CD4-positive, alpha-beta memory T cell (primary cell): ENCODE measurements at regions of chr12 and their contacts with region 1.

Region 1: DNA sequence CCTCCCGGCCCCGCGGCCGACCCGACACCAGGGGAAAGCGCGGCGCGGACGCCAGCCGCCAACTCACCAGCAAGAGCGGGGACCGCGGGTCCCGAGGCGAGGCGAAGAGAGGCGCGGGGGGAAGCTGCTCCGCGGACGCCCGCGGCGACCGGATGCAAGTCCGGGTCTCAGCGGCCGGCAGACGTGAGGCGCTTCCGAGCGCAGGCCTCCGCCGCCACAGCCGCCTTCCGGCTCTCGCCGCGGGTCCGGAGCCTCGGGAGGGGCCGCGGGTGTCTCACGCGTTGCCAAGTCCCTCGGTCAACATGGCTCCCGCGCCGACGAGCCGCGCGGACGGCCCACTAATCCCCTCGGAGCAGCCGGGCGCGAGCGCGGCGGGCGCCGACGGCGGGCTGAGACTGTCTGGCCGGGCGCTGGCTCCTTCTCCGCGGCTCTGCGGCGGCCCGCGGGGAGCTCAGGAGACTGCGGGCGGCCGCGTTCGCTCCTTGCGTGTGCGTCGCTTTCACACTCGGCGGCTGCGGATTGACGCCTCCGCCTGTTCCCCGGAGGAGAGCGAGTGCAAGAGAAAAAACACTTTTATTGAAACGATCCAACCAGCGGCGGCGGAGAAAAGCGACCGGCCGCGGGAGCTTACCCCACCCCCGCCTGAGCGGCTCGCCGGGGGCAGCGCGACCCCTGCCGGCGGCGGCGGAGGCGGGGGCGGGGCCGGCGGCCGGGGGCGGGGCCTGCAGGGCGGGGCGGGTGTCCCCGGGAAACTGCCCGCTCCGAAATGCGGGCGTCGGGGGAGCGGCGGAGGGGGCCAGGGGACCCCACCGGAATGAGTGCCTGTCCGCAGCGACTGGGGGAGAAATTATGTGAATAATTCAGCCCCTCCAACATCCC is at the start of gene CDK17:
- DNase-seq: peak; percentile 90 to 92 (median 90)
- H3K4me3 ChIP-seq: peak within 1 kb of the TSS; percentile 86 to 87
- H3K4me3 Mint-ChIP-seq: peak within 1 kb of the TSS; percentile 96 to 99 (median 98)
- H3K27ac ChIP-seq: peak within 1 kb of the TSS; percentile 96
- H3K27ac Mint-ChIP-seq: peak within 1 kb of the TSS; percentile 96 to 99 (median 98)
- H3K4me1 ChIP-seq: peaks cover 45% of the 10 kb centered on the region
- H3K4me1 Mint-ChIP-seq: peaks cover 30 to 55% (median 40%) of the 10 kb centered on the region in 4 donors
- H3K27me3 ChIP-seq: no peaks in the 10 kb centered on the region
- H3K27me3 Mint-ChIP-seq: no peaks in the 10 kb centered on the region
- total RNA-seq, gene CDK17: 66.9 to 67.4 TPM

Region 2: DNA sequence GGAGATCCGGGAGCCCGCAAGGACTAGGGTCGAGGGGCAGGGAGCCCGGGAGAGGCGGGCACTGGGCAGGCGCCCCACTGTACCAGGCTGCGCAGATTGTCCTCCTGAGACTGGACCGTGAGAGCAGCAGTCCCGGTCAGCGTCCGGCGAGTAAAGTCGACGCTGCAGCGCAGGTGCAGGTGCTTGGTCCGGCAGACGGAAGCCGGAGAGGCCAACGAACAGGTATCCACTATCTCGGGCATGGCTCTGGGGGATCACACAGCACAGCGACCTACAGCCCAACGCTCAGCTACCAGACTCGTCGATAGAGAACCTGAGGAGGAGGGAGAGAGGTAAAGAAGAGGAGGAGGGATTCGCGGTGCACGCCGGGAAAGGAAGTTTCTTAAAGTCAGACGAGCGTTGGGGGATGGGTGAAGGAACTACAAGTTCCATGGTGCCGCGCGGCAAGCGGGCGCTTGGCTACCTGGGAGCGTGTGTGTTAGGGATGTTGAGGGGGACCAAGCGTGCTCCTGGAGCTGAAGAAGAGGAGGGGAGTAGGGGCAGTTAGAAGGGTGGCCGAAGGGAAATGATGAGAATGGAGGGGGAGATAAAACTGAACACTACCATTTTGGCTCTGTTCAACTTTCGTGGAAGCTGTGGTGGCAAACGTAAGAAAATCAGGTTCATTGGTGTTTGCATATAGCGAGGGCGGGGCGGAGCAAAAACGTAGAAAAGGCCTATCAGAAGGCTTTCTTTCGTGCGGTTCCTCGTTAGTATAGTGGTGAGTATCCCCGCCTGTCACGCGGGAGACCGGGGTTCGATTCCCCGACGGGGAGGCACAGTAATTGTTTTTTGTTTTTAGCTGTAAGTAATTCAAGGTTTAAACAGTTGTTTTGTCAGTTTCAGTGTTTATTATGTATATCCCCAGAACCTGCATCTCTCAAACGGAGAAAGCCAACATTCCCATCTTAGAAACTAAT is 364.6 kb before region 1 on chr12 and contains the start of gene LTA4H:
- CTCF ChIA-PET with region 1: interaction called, 4 read pairs
- POLR2A ChIA-PET with region 1: interaction called, 15 read pairs
- intact Hi-C with region 1: loop called (anchors 1 kb)
- DNase-seq: peak; percentile 97 to 98 (median 97)
- H3K4me3 ChIP-seq: peak within 1 kb of the TSS; percentile 95 to 98
- H3K4me3 Mint-ChIP-seq: no peak within 1 kb of the TSS
- H3K27ac ChIP-seq: peak within 1 kb of the TSS; percentile 76
- H3K27ac Mint-ChIP-seq: no peak within 1 kb of the TSS
- H3K4me1 ChIP-seq: peaks cover 23% of the 10 kb centered on the region
- H3K4me1 Mint-ChIP-seq: peaks cover 4 to 14% (median 8%) of the 10 kb centered on the region in 4 donors
- H3K27me3 ChIP-seq: no peaks in the 10 kb centered on the region
- H3K27me3 Mint-ChIP-seq: no peaks in the 10 kb centered on the region
- total RNA-seq, gene LTA4H: 57.7 to 58.2 TPM

Region 3: DNA sequence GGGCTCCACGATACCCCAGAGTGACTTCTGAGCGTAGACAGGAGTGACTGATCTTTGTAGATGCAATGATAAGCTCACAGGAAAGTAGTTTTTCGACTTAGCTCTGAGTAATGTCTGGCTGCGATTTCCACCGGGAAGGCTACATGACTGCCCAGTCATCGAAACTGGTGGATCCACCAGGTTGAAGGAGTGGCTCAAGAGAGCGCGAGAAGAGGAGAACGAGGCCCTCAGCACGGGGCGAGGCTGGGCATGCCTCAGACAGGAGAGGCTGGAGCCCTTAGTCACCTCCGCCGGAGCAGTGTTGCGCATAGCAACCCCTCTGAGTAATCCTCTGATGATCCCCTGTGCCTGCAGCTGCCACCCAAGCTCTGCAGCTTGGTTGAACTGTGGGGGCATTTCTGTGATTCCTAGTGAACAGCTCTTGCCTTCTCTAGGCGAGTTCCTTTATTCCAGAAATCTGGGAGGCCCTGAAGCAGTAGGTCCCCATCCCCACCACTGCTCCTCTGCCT is 180.4 kb before region 1 on chr12:
- CTCF ChIA-PET with region 1: interaction called, 33 read pairs
- POLR2A ChIA-PET with region 1: interaction called, 28 read pairs
- intact Hi-C with region 1: loop called (anchors 1 kb)
- DNase-seq: no peak
- H3K4me3 ChIP-seq: no peak overlapping the region
- H3K4me3 Mint-ChIP-seq: peak overlapping the region in 2 of 8 donors; percentile 16 to 51
- H3K27ac ChIP-seq: no peak overlapping the region
- H3K27ac Mint-ChIP-seq: peak overlapping the region; percentile 50 to 78 (median 68)
- H3K4me1 ChIP-seq: peaks cover 37% of the 10 kb centered on the region
- H3K4me1 Mint-ChIP-seq: peaks cover 37 to 73% (median 51%) of the 10 kb centered on the region in 4 donors
- H3K27me3 ChIP-seq: no peaks in the 10 kb centered on the region
- H3K27me3 Mint-ChIP-seq: no peaks in the 10 kb centered on the region

Region 4: GRCh38 chr12:96303653-96304052 is 96.5 kb before region 1 on chr12:
- CTCF ChIA-PET with region 1: interaction called, 21 read pairs
- POLR2A ChIA-PET with region 1: interaction called, 11 read pairs
- intact Hi-C with region 1: loop called (anchors 5 kb)
- DNase-seq: no peak
- H3K4me3 ChIP-seq: no peak overlapping the region
- H3K4me3 Mint-ChIP-seq: no peak overlapping the region
- H3K27ac ChIP-seq: no peak overlapping the region
- H3K27ac Mint-ChIP-seq: no peak overlapping the region
- H3K4me1 ChIP-seq: peaks cover 13% of the 10 kb centered on the region
- H3K4me1 Mint-ChIP-seq: peaks cover 14 to 37% (median 18%) of the 10 kb centered on the region in 4 donors
- H3K27me3 ChIP-seq: no peaks in the 10 kb centered on the region
- H3K27me3 Mint-ChIP-seq: no peaks in the 10 kb centered on the region

Region 5: DNA sequence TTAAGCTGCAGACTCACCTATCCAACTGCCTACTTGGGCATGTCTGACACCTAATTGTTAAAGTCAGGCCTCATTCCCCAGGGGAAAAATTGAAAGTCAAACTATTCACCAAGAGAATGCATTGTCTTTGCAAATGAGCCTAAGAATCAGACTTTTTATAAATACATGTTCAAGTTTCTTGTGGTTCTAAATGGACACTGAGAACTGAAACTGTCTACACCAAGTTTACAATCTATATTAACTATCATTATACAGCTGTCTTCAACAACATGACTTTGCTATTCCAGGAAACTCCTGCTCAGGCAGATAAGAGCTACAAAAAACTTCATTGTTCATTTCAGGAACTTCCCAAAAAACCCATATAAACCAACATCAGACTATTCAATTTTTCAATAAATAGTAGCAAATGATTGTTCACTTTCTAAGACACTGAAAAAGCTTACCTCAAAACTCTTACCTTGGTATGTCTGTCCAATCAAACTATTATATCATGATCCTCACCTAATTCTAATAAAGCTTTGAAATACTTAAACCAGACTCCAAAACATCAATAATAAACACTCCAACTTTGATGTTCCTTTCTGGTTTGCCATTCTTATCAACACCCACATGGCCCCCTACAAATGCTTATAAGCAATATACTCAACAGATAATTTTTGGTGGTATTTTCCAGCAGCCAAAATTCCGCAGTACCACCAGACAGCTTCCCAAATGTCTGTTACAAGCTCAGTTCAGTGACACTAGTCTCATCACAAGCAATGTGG is 24.1 kb before region 1 on chr12:
- CTCF ChIA-PET with region 1: interaction called, 36 read pairs
- POLR2A ChIA-PET with region 1: interaction called, 81 read pairs
- intact Hi-C with region 1: loop called (anchors 1 kb)
- DNase-seq: no peak
- H3K4me3 ChIP-seq: no peak overlapping the region
- H3K4me3 Mint-ChIP-seq: peak overlapping the region in 7 of 8 donors; percentile 9 to 67 (median 33)
- H3K27ac ChIP-seq: peak overlapping the region; percentile 68
- H3K27ac Mint-ChIP-seq: peak overlapping the region; percentile 30 to 97 (median 71)
- H3K4me1 ChIP-seq: peaks cover 87% of the 10 kb centered on the region
- H3K4me1 Mint-ChIP-seq: peaks cover 57 to 85% (median 69%) of the 10 kb centered on the region in 4 donors
- H3K27me3 ChIP-seq: no peaks in the 10 kb centered on the region
- H3K27me3 Mint-ChIP-seq: no peaks in the 10 kb centered on the region

Region 6: GRCh38 chr12:96445691-96446583 is 45.8 kb after region 1 on chr12:
- CTCF ChIA-PET with region 1: interaction called, 34 read pairs
- POLR2A ChIA-PET with region 1: interaction called, 42 read pairs
- intact Hi-C with region 1: loop called (anchors 1 kb)
- DNase-seq: peak; percentile 82 to 91 (median 86)
- H3K4me3 ChIP-seq: no peak overlapping the region
- H3K4me3 Mint-ChIP-seq: peak overlapping the region in 7 of 8 donors; percentile 31 to 72 (median 67)
- H3K27ac ChIP-seq: peak overlapping the region; percentile 92
- H3K27ac Mint-ChIP-seq: peak overlapping the region; percentile 93 to 99 (median 98)
- H3K4me1 ChIP-seq: peaks cover 36% of the 10 kb centered on the region
- H3K4me1 Mint-ChIP-seq: peaks cover 27 to 52% (median 36%) of the 10 kb centered on the region in 4 donors
- H3K27me3 ChIP-seq: no peaks in the 10 kb centered on the region
- H3K27me3 Mint-ChIP-seq: no peaks in the 10 kb centered on the region